Breast epithelium (tissue), 4 donors: ENCODE measurements at regions of chr11 and their contacts with region 1.

Region 1: GRCh38 chr11:70183483-70184169 is 19.5 kb upstream of the FADD start:
- DNase-seq: peak; percentile 85
- H3K4me3 ChIP-seq: no peak overlapping the region
- H3K27ac ChIP-seq: peak overlapping the region; percentile 68 to 72
- H3K4me1 ChIP-seq: peaks cover 0 to 10% of the 10 kb centered on the region in 2 donors
- H3K27me3 ChIP-seq: no peaks in the 10 kb centered on the region
- CTCF ChIP-seq: no peak
- POLR2A ChIP-seq: no peak

Region 2: DNA sequence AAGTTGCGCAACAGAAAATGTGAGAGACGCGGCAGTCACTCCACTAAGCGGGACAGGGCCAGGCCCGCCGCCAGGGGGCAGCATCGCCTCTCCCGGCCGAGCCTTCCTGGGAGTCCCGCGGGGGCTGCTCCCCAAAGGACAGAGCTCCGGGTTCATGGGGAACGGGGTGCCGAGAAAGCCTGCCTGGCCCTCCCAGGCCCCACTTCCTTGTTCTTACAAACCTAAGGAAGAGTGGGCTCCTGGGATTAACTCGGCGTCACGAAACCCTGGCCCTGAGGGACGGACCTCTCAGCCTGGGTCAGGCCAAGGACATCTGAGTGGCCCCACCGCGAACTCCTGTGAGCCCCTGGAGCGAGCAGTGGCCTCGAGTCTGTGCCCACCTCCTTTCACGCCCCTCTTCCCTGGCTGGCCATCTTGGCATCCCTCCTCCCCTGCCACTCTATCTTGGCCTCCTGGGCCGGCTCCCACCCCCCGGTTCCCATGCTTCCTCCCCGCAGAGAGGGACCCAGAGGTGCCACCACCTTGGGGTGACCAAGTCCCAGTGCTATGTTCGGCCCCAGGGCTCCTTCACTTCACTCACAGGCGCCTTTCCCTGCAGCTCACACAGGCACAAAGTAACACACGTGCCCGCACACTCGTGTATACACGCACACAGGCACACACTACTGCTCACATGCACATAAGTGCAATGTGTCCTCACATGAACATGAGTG is 264.5 kb before region 1 on chr11:
- intact Hi-C with region 1: loop called (anchors 10 kb)
- DNase-seq: peak; percentile 78 to 81
- H3K4me3 ChIP-seq: peak overlapping the region in 2 of 3 donors; percentile 6 to 26
- H3K27ac ChIP-seq: peak overlapping the region; percentile 84 to 90
- H3K4me1 ChIP-seq: peaks cover 11 to 18% of the 10 kb centered on the region in 2 donors
- H3K27me3 ChIP-seq: no peaks in the 10 kb centered on the region
- CTCF ChIP-seq: peak; percentile 87 to 96 (median 88)
- POLR2A ChIP-seq: no peak